Posterior vena cava (tissue), 2 donors: ENCODE measurements at regions of chr16 and their contacts with region 1.

Region 1: DNA sequence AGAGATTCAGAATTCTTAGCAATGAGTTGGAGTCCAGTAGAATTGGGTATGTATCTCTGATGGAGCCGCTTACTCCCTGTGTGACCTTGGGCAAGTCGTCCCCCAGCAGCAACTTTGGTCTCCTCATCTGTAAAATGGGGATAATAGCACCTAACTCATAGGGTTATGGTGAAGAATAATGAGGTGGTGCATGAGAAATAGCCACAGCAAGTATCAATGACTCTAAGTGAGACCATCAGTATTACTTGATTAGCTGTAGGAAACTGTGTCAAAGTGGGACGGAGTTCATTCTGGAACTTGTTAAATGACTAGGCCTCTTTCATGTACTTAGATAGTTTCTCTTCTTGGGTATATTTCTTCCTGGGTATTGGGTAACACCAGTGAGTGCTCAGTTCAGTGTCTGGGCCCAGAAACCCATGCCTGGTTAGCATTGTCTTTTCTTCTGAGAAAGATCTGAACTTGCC is 6.4 kb downstream of the PRKCB start:
- DNase-seq: no peak

Region 2: DNA sequence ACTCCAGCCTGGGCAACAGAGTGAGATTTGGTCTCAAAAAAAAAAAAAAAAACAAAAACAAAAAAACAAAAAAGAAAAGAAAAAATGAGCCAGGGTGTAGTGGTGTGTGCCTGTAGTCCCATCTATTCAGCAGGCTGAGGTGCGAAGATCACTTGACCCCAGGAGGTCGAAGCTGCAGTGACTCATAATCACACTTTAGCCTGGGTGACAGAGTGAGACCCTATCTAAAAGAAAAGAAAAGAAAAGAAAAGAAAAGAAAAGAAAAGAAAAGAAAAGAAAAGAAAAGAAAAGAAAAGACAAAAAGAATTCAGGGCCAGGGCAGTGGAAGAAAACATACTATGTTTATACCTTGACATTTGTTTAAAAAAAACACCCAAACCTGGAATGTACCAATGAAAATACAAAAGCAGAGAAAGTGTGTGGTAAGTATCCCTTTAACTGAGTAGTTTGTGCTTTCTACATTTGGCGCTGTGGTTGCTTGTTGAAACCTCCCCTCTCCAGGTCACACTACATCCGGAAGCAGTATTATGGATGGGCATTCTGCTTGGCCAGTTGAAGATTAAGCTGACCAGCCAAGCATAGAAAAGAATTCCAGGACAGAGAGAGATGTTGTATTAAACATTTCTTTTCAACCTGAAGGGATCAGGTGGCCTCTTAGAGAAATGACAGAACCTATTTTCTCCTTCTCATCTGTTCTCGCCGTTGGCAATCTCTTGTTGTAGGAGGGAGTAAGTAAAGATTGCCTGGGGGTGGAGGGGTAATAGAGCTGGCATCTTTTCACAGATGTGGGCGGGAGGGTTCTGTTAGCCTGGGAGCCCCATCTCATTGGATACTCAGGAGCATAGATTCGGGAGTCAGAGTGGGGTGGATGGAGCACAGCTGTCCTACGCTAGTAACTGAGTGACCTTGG is 18.4 kb before region 1 on chr16:
- intact Hi-C with region 1: loop called in 1 of 2 experiments (anchors 1 kb)
- DNase-seq: no peak